Calu3 (cell line): ENCODE measurements at regions of chr7 and their contacts with region 1.

Region 1: DNA sequence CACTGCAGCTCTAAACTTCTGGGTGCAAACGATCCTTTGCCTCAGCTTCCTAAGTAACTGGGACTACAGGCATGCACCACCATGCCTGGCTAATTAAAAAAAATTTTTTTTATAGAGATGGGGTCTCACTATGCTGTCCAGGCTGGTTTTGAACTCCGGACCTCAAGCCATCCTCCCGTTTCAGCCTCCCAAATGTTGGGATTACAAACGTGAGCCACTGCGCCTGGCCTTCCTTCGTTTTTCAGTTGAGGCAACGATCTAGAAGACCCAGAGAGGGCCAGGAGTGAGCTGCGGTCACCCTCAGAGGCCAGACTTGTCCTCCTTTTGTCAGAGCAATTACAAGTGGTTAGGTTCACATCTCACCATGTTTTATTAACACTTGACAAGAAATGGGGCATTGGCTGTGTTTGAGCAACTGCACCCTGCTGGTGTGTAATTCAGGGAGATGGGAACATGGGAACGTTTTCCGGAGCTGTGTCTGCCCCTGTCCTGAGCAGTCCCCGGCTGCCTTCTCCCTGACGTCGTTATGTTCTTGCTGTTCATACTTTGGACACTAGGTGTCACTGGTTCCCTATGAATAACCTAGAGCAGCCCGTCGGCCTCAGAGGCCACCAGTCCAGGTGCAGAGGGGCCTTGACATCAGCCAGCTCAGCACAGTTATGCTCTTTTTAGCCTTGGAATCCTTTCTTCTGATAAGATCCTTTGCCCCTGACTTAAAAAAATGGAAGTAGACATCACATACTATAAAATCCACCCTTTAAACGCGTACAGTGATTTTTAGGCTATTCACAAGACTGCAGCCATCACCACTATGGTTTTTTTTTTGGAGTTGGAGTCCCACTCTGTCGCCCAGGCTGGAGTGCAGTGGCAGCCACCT is 375.0 kb downstream of the TYW1 start:
- DNase-seq: peak; percentile 66
- H3K4me3 Mint-ChIP-seq: no peak overlapping the region
- H3K27ac Mint-ChIP-seq: no peak overlapping the region
- H3K4me1 Mint-ChIP-seq: no peaks in the 10 kb centered on the region
- H3K27me3 Mint-ChIP-seq: peaks cover 21% of the 10 kb centered on the region
- CTCF ChIP-seq: peak; percentile 53

Region 2: DNA sequence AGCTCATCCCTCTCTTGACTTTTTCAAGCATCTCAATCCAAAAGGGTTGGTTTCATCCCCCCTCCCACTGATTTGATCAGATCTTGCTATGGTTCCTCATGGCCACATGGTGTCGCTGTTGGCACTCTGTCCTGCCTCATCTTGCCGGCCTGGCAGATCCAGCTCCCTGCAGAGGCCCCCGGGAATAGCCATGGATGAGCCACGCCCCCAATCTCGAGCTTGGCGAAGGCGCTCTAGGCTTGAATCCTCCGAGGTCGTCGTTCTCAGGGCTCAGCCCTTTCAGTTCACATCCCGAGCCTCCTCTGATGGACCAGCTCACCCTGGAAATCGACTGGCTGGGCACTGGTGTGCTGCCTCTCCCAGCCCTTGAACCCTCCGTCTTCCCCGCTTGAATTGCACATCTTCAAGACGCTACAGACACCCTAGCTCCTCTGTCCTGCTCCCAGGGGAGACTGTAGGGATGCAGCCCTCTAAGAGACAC is 253.6 kb after region 1 on chr7:
- CTCF ChIA-PET with region 1: no interaction called
- intact Hi-C with region 1: loop called (anchors 10 kb)
- DNase-seq: peak; percentile 45
- H3K4me3 Mint-ChIP-seq: no peak overlapping the region
- H3K27ac Mint-ChIP-seq: no peak overlapping the region
- H3K4me1 Mint-ChIP-seq: no peaks in the 10 kb centered on the region
- H3K27me3 Mint-ChIP-seq: no peaks in the 10 kb centered on the region
- CTCF ChIP-seq: peak; percentile 28